ENCODE measurements at regions of chr4 and their contacts with region 1.

Region 1: GRCh38 chr4:127936974-127937373 is 28.0 kb downstream of the MFSD8 start:
- DNase-seq: no peak
- H3K4me3 ChIP-seq: no peak overlapping the region
- CTCF ChIP-seq: no peak
- POLR2A ChIP-seq: no peak

Region 2: GRCh38 chr4:128310266-128310697 is 373.3 kb after region 1 on chr4:
- intact Hi-C with region 1: loop called (anchors 5 kb)
- DNase-seq: no peak
- H3K4me3 ChIP-seq: no peak overlapping the region
- CTCF ChIP-seq: no peak
- POLR2A ChIP-seq: no peak

Region 3: DNA sequence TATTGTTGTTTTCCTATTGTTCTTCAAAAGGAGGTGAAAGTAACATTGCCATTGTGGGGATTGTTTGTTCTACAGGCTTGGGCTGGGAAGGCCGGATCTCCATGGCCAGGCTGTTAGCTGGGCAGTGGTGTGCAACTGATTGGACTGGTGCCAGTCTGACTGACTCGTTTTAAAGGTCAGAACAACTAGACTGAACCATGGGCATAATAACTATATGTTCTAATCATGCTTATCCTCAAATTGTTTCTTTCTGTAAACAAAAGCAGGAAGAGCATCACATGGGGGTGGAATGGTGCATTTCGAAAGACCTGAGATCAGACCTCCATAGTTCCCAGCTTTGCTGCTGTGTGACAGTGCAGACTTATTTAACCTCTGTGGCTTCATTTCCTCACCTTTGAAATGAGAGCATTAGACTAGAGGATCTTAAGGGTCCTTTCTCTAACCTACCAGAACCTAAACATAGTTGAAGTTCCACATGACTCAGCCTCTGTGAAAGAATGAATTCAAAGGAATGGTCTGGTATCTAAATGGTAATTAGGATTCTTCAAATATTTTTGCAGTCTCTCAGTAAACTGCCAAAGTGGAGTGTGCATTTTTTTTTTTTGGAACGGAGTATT is 417.3 kb after region 1 on chr4:
- intact Hi-C with region 1: no loop called
- DNase-seq: no peak
- H3K4me3 ChIP-seq: no peak overlapping the region
- CTCF ChIP-seq: no peak
- POLR2A ChIP-seq: no peak

Region 4: GRCh38 chr4:128803783-128804182 is 866.8 kb after region 1 on chr4:
- intact Hi-C with region 1: no loop called
- DNase-seq: no peak
- H3K4me3 ChIP-seq: no peak overlapping the region
- CTCF ChIP-seq: no peak
- POLR2A ChIP-seq: no peak